Sigmoid colon (tissue), 7 donors: ENCODE measurements at regions of chr19 and their contacts with region 1.

Region 1: GRCh38 chr19:15629003-15629880 is 11.5 kb upstream of the CYP4F3 start:
- DNase-seq: peak; percentile 87
- H3K4me3 ChIP-seq: no peak overlapping the region
- H3K27ac ChIP-seq: no peak overlapping the region
- H3K4me1 ChIP-seq: peaks cover 0 to 5% (median 2%) of the 10 kb centered on the region in 4 donors
- H3K27me3 ChIP-seq: peaks cover 0 to 27% (median 7%) of the 10 kb centered on the region in 3 donors
- CTCF ChIP-seq: peak; percentile 90 to 98 (median 97)
- EP300 ChIP-seq: no peak
- POLR2A ChIP-seq: no peak

Region 2: GRCh38 chr19:15614507-15615379 is 14.5 kb before region 1 on chr19 and contains the start of gene CYP4F8:
- intact Hi-C with region 1: no loop called
- DNase-seq: no peak
- H3K4me3 ChIP-seq: no peak within 1 kb of the TSS
- H3K27ac ChIP-seq: no peak within 1 kb of the TSS
- H3K4me1 ChIP-seq: no peaks in the 10 kb centered on the region
- H3K27me3 ChIP-seq: peaks cover 0 to 15% (median 0%) of the 10 kb centered on the region in 3 donors
- CTCF ChIP-seq: no peak
- EP300 ChIP-seq: no peak
- POLR2A ChIP-seq: no peak
- total RNA-seq, gene CYP4F8: not detected

Region 3: DNA sequence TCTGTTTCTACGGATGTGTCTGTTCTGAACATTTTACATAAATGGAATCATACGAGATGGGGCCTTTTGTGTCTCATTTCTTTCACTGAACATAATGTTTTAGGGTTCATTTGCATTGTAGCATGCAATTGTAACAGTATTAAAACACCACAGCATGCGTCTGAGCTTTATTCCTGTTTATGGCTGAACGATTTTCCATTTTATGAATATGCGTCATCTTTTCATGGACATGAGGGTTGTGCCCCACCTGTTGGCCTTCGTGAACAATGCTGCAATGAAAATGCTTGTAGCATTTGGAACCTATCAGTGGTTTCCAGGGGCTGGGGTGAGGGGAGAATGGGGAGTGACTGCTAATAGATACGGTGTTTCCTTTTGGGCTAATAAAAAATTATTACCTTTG is 181.1 kb after region 1 on chr19:
- intact Hi-C with region 1: loop called (anchors 2 kb)
- DNase-seq: no peak
- H3K4me3 ChIP-seq: peak overlapping the region in 1 of 4 donors; percentile 8
- H3K27ac ChIP-seq: no peak overlapping the region
- H3K4me1 ChIP-seq: peaks cover 0 to 7% (median 3%) of the 10 kb centered on the region in 4 donors
- H3K27me3 ChIP-seq: peaks cover 0 to 17% (median 0%) of the 10 kb centered on the region in 3 donors
- CTCF ChIP-seq: peak; percentile 12 to 48 (median 48)
- EP300 ChIP-seq: no peak
- POLR2A ChIP-seq: no peak

Region 4: GRCh38 chr19:15869109-15869555 is 239.9 kb after region 1 on chr19:
- intact Hi-C with region 1: loop called (anchors 1 kb)
- DNase-seq: no peak
- H3K4me3 ChIP-seq: no peak overlapping the region
- H3K27ac ChIP-seq: no peak overlapping the region
- H3K4me1 ChIP-seq: no peaks in the 10 kb centered on the region
- H3K27me3 ChIP-seq: peaks cover 0 to 30% (median 21%) of the 10 kb centered on the region in 3 donors
- CTCF ChIP-seq: peak; percentile 34 to 73 (median 54)
- EP300 ChIP-seq: no peak
- POLR2A ChIP-seq: no peak

Region 5: DNA sequence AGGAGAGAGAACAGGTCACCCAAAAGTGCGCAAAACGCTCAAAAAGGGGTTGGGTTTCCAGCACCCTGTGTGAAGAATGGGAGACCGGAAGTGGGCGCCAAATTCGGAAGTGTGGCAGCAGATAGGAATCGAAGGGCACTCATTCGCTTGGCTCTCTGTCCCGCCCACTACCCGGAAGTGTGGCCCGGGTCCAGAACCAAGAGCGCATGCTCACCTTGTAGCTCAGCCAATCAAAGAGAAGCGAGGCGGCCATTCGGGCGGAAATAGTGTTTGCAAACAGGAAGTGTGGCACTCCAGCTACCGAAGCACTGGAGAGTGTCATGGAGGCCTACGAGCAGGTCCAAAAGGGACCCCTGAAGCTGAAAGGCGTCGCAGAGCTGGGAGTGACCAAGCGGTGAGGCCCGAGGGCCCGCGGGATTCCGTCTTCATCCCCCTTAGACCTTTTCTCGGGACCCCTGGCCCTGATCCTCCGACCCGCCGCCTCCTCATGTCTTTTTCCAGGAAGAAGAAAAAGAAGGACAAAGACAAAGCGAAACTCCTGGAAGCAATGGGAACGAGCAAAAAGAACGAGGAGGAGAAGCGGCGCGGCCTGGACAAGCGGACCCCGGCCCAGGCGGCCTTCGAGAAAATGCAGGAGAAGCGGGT is 556.0 kb after region 1 on chr19 and contains the start of gene FAM32A:
- intact Hi-C with region 1: loop called (anchors 2 kb)
- DNase-seq: peak; percentile 100
- H3K4me3 ChIP-seq: peak within 1 kb of the TSS; percentile 81 to 90 (median 83)
- H3K27ac ChIP-seq: peak within 1 kb of the TSS; percentile 83 to 87 (median 84)
- H3K4me1 ChIP-seq: peaks cover 0 to 25% (median 21%) of the 10 kb centered on the region in 4 donors
- H3K27me3 ChIP-seq: no peaks in the 10 kb centered on the region
- CTCF ChIP-seq: no peak
- EP300 ChIP-seq: no peak
- POLR2A ChIP-seq: peak; percentile 74 to 78
- total RNA-seq, gene FAM32A: 86.9 to 97.7 (median 92.5) TPM